Activated B cell treated with CpG ODN at 0.5 μM for 24 hours (primary cell): ENCODE measurements at regions of chr18 and their contacts with region 1.

Region 1: DNA sequence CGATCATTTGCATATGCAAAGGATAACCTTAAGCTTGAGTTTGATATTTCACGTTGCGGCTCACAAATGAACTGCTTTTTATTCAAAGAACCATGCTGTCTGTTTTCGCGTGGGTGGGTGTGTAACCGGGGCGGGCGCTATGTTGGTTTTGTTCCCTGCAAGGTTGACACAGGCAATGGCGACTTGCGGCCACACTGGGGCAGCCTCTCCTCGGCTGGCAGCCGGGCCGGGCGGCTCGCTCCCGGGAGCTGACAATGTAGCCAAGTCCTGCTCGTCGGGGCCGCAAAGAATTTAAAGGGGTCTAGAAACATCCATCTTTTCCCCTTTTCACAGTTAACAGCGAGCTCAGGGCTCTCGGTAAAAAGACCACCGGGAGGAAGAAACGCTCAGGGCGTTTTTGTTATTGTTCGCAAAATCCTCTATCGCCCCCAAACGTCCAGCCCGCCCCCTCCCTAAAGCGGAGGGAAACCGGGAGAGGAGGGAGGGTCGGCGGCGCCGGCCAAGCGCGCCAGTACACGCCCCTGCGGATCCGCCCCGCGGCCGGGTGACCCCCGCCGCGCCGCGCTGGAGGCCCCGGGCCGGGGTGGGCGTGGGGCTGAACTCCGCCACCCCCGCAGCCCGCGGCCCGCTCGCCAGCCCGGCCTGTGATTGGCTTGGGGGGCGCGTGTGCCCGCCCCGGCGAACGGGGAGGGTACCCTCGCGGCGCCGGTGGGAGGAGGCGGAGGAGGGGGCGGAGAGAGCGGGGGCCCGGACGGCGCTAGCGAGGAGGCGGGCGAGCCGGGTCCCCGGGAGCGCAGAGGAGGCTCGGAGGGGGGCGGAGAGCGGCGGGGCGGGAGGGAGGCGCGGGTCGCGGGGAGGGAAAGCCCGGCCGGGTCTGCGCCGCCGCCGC is at the start of gene NEDD4L:
- DNase-seq: peak; percentile 83
- ATAC-seq: peak; percentile 85
- H3K4me3 Mint-ChIP-seq: peak within 1 kb of the TSS; percentile 93
- H3K27ac Mint-ChIP-seq: peak within 1 kb of the TSS; percentile 82
- H3K4me1 Mint-ChIP-seq: peaks cover 41% of the 10 kb centered on the region
- H3K27me3 Mint-ChIP-seq: no peaks in the 10 kb centered on the region
- CTCF ChIP-seq: no peak
- total RNA-seq, gene NEDD4L: 24.9 and 32.6 TPM in 2 replicates

Region 2: DNA sequence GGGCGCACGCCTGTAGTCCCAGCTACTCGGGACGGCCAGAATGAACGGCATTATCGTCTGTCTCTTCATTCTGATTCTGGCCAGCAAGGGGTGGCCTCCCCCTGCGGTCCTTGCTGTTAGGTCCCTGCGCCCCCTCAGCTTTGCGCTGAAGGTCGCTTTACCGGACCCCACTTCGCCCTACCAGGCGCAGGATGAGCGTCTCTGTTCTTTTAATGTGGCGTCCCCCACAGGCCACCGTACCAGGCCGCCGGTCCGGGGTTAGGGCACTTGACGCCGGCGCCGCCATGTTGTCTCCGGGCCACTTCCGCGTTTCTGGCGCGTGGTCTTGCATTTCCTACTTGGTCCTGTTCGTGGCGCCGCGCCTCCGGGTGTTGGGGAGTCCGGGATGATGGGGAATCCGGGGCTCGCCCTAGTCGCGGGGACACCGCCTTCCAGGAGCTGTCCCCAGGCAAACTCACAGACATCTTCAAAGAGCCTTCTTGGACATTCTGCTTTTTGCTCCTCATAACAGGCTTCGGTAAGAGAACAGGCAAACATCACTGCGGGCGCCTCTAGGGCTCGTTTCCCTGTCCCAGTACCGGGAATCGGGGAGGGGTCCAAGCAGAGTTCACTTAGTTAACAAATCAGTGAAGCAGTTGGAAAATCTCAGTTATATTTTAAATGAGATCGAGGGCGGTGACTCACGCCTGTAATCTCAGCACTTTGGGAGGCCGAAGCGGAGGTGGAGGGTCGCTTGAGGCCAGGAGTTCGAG is 413.6 kb before region 1 on chr18:
- CTCF ChIA-PET with region 1: no interaction called
- POLR2A ChIA-PET with region 1: no interaction called
- intact Hi-C with region 1: loop called (anchors 1 kb)
- DNase-seq: peak; percentile 90
- ATAC-seq: peak; percentile 91
- H3K4me3 Mint-ChIP-seq: peak overlapping the region; percentile 98
- H3K27ac Mint-ChIP-seq: peak overlapping the region; percentile 99
- H3K4me1 Mint-ChIP-seq: peaks cover 26% of the 10 kb centered on the region
- H3K27me3 Mint-ChIP-seq: no peaks in the 10 kb centered on the region
- CTCF ChIP-seq: no peak

Region 3: GRCh38 chr18:57959278-57959677 is 84.5 kb before region 1 on chr18:
- CTCF ChIA-PET with region 1: interaction called, 29 read pairs
- POLR2A ChIA-PET with region 1: interaction called, 3 read pairs
- intact Hi-C with region 1: loop called (anchors 1 kb)
- DNase-seq: no peak
- ATAC-seq: peak; percentile 88
- H3K4me3 Mint-ChIP-seq: no peak overlapping the region
- H3K27ac Mint-ChIP-seq: no peak overlapping the region
- H3K4me1 Mint-ChIP-seq: no peaks in the 10 kb centered on the region
- H3K27me3 Mint-ChIP-seq: no peaks in the 10 kb centered on the region
- CTCF ChIP-seq: no peak

Region 4: GRCh38 chr18:58117786-58118403 is 74.2 kb after region 1 on chr18:
- CTCF ChIA-PET with region 1: interaction called, 52 read pairs
- POLR2A ChIA-PET with region 1: interaction called, 14 read pairs
- intact Hi-C with region 1: loop called (anchors 1 kb)
- DNase-seq: no peak
- ATAC-seq: no peak
- H3K4me3 Mint-ChIP-seq: no peak overlapping the region
- H3K27ac Mint-ChIP-seq: no peak overlapping the region
- H3K4me1 Mint-ChIP-seq: peaks cover 10% of the 10 kb centered on the region
- H3K27me3 Mint-ChIP-seq: no peaks in the 10 kb centered on the region
- CTCF ChIP-seq: no peak

Region 5: DNA sequence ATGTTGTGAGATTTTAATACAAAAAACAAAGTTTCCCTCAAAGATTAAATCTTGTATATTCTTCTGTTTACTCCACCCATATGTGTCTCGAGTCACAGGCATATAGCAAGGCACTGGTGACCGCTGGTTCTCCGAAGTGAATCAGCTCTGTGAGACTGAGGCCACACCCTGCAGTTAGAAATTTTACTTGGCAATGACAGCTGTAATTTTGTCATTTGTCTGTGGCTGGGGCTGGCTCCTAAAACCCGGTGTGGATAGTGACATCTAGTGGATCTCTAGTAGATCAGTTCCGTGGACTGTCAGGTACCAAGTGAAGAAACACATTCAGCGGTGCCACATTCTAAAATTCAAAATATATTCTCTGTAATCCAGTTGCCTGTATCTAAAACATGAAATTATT is 278.3 kb after region 1 on chr18:
- CTCF ChIA-PET with region 1: interaction called, 7 read pairs
- POLR2A ChIA-PET with region 1: no interaction called
- intact Hi-C with region 1: loop called (anchors 1 kb)
- DNase-seq: no peak
- ATAC-seq: peak; percentile 77
- H3K4me3 Mint-ChIP-seq: no peak overlapping the region
- H3K27ac Mint-ChIP-seq: no peak overlapping the region
- H3K4me1 Mint-ChIP-seq: peaks cover 11% of the 10 kb centered on the region
- H3K27me3 Mint-ChIP-seq: no peaks in the 10 kb centered on the region
- CTCF ChIP-seq: no peak

Region 6: DNA sequence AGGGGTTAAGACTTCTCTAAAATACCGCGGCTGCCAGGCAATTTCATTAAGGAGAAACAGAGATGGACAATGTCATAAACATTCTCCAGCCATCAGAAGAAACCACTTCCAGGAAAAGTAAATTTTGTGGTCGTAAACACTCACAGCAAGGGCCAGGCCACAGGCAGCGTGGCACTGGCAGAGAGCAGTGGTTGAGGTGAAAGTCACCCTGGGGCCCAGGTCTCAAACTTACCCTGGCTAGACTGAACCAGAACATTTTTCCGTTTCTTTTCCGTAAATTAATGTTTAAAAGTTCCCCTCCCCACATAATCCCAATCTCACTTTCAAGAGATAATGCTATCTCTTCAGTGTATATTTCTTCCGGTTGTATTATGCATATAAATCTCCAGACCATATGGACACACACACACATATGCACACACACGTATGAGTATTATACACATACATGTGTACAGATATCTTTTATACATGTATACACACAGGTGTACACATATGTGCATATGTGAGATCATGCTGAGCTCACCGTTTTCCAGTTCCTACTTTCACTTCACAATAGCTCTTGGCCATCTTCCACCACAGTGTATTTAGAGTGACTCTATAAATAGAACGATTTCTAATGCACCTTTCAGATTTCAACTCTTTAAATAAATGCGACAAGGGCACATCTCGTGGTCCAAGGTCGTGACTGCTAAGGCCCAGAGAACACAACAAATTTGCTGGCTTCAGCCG is 717.7 kb after region 1 on chr18:
- CTCF ChIA-PET with region 1: interaction called, 5 read pairs
- POLR2A ChIA-PET with region 1: no interaction called
- intact Hi-C with region 1: loop called (anchors 5 kb)
- DNase-seq: no peak
- ATAC-seq: peak; percentile 43
- H3K4me3 Mint-ChIP-seq: no peak overlapping the region
- H3K27ac Mint-ChIP-seq: peak overlapping the region; percentile 20
- H3K4me1 Mint-ChIP-seq: peaks cover 27% of the 10 kb centered on the region
- H3K27me3 Mint-ChIP-seq: peaks cover 6% of the 10 kb centered on the region
- CTCF ChIP-seq: no peak

Region 7: GRCh38 chr18:58900015-58900649 is 856.4 kb after region 1 on chr18:
- CTCF ChIA-PET with region 1: no interaction called
- POLR2A ChIA-PET with region 1: no interaction called
- intact Hi-C with region 1: no loop called
- DNase-seq: no peak
- ATAC-seq: no peak
- H3K4me3 Mint-ChIP-seq: no peak overlapping the region
- H3K27ac Mint-ChIP-seq: no peak overlapping the region
- H3K4me1 Mint-ChIP-seq: peaks cover 73% of the 10 kb centered on the region
- H3K27me3 Mint-ChIP-seq: no peaks in the 10 kb centered on the region
- CTCF ChIP-seq: no peak